ENCODE measurements at regions of chr5 and their contacts with region 1.

Region 1: DNA sequence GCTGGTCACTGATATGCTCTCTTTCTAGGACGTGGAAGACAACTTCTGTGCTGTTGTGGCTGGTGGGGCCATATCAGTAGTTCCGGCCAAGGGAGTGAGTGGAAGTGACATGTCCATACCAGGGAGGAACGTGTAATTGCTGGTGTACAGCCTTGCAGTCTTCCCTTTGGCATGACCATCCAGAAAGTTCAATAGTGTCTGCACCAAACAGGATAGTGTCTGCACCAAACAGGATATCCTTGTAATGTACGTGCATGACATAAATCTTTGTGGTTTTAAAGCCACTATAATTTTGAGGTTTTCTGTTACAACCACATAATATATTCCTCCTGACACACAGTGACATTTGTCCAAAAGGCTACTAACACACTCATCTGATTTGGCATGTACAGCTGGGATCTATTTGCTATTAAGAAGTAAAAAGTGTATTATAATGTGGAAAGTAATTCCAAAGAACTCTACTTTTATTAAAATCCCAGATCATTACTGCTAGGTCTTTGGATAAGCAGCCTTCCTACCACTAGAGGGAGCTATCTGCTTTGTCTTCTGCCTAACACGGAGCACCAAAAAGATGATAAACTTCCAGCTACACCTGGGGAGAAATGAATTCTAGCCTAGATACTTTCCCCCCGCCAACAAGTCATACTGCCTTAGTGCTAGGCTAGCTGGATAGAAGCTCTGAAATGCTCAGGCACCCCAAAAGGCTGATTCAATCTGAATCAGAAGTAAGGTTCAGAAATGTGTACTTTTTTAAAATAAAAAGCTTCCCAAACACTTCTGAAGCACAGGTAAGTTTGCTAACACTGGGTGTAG is 52.7 kb downstream of the RNF145 start:
- DNase-seq: peak; percentile 82
- H3K4me3 Mint-ChIP-seq: no peak overlapping the region
- H3K27ac Mint-ChIP-seq: no peak overlapping the region
- H3K4me1 Mint-ChIP-seq: peaks cover 29% of the 10 kb centered on the region
- H3K27me3 Mint-ChIP-seq: no peaks in the 10 kb centered on the region

Region 2: GRCh38 chr5:158875272-158875679 is 281.4 kb before region 1 on chr5:
- intact Hi-C with region 1: no loop called
- DNase-seq: no peak
- H3K4me3 Mint-ChIP-seq: peak overlapping the region; percentile 57
- H3K27ac Mint-ChIP-seq: peak overlapping the region; percentile 81
- H3K4me1 Mint-ChIP-seq: peaks cover 27% of the 10 kb centered on the region
- H3K27me3 Mint-ChIP-seq: peaks cover 3% of the 10 kb centered on the region

Region 3: GRCh38 chr5:159262859-159263567 is 106.4 kb after region 1 on chr5 and contains the start of gene UBLCP1:
- intact Hi-C with region 1: loop called (anchors 1 kb)
- DNase-seq: peak; percentile 92
- H3K4me3 Mint-ChIP-seq: peak within 1 kb of the TSS; percentile 92
- H3K27ac Mint-ChIP-seq: peak within 1 kb of the TSS; percentile 97
- H3K4me1 Mint-ChIP-seq: peaks cover 24% of the 10 kb centered on the region
- H3K27me3 Mint-ChIP-seq: peaks cover 3% of the 10 kb centered on the region
- total RNA-seq, gene UBLCP1: 30.2 and 31.2 TPM in 2 replicates

Region 4: DNA sequence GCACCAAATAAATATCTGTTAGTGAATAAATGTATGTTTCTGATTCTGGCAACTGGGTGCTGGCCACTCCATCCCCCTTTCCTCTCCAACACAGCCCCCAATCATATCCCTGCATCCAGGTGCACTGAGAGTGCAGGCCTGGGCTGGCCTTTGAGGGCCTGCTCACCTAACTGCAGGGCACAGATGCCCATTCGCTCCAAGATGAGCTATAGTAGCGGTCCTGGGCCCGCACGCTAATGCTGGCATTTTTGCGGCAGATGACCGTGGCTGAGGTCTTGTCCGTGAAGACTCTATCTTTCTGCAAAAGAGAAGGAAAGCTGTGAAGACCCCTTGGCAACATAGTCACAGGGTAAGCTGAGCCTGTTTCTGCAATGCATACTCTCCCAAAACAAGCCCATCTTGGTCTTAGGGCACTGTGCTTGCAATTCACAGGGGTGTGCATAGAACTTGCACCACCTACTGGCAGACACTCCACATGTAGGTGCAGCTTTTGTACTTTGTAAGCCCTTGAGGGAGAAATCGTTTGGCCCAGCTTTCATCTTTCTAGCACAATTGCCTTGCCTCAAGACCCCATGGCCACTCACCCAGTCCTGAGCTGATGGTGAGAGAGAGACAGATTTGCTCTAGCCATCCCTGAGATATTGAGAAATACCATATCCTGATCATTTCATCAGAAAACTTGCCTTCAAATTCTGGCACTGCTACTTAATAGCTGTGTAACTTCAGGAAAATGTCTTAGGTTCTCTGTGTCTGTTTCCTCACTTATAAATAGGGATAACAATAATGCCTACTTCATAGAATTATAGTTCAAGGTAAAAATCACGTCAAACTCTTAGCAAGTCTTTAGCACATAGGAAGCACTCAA is 160.1 kb after region 1 on chr5:
- intact Hi-C with region 1: loop called (anchors 1 kb)
- DNase-seq: peak; percentile 81
- H3K4me3 Mint-ChIP-seq: no peak overlapping the region
- H3K27ac Mint-ChIP-seq: no peak overlapping the region
- H3K4me1 Mint-ChIP-seq: no peaks in the 10 kb centered on the region
- H3K27me3 Mint-ChIP-seq: peaks cover 34% of the 10 kb centered on the region

Region 5: GRCh38 chr5:159336991-159337955 is 180.6 kb after region 1 on chr5:
- intact Hi-C with region 1: loop called (anchors 5 kb)
- DNase-seq: peak; percentile 88
- H3K4me3 Mint-ChIP-seq: peak overlapping the region; percentile 48
- H3K27ac Mint-ChIP-seq: peak overlapping the region; percentile 76
- H3K4me1 Mint-ChIP-seq: peaks cover 64% of the 10 kb centered on the region
- H3K27me3 Mint-ChIP-seq: peaks cover 4% of the 10 kb centered on the region

Measured in activated CD4-positive, alpha-beta T cell treated with anti-CD3 and anti-CD28 coated beads, Interleukin-2, amount 10 ng/mL, durations not matched to agents 24 days and 14 days (primary cell).